ENCODE measurements at regions of chrX and their contacts with region 1.

Region 1: GRCh38 chrX:24479924-24480323 is 14.8 kb downstream of the PDK3 start:
- DNase-seq: peak; percentile 82
- ATAC-seq: peak; percentile 94
- H3K4me3 Mint-ChIP-seq: peak overlapping the region; percentile 68
- H3K27ac Mint-ChIP-seq: peak overlapping the region; percentile 91
- H3K4me1 Mint-ChIP-seq: peaks cover 75% of the 10 kb centered on the region
- H3K27me3 Mint-ChIP-seq: no peaks in the 10 kb centered on the region

Region 2: GRCh38 chrX:24498975-24499374 is 19.1 kb after region 1 on chrX:
- CTCF ChIA-PET with region 1: interaction called, 32 read pairs
- POLR2A ChIA-PET with region 1: interaction called, 4 read pairs
- intact Hi-C with region 1: loop called in 1 of 2 experiments (anchors 2 kb)
- DNase-seq: no peak
- ATAC-seq: peak; percentile 78
- H3K4me3 Mint-ChIP-seq: no peak overlapping the region
- H3K27ac Mint-ChIP-seq: peak overlapping the region; percentile 43
- H3K4me1 Mint-ChIP-seq: peaks cover 23% of the 10 kb centered on the region
- H3K27me3 Mint-ChIP-seq: no peaks in the 10 kb centered on the region

Region 3: DNA sequence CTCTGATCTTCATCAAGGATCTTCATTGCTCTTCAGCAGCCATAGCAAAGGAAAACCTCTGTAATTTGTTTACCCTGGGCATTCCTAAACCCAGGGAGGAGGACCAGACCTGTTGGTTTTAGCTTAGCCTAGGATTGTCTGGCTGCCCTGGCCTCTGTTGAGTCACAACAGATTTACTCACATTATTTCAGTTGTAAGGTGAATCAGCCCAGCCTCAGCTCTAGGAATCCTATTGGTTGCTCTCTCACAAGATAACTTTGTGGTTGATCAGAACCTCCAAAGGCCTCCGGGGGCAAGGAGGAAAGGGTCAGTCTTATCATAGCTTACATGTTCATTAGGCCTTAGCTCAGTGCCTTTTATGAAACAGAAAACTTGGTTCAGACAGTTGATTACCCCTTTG is 26.1 kb after region 1 on chrX:
- CTCF ChIA-PET with region 1: interaction called, 4 read pairs
- POLR2A ChIA-PET with region 1: interaction called, 3 read pairs
- intact Hi-C with region 1: loop called (anchors 2 to 5 kb)
- DNase-seq: peak; percentile 53
- ATAC-seq: peak; percentile 93
- H3K4me3 Mint-ChIP-seq: no peak overlapping the region
- H3K27ac Mint-ChIP-seq: peak overlapping the region; percentile 73
- H3K4me1 Mint-ChIP-seq: peaks cover 24% of the 10 kb centered on the region
- H3K27me3 Mint-ChIP-seq: no peaks in the 10 kb centered on the region

Region 4: GRCh38 chrX:24513416-24513815 is 33.5 kb after region 1 on chrX:
- CTCF ChIA-PET with region 1: no interaction called
- POLR2A ChIA-PET with region 1: no interaction called
- intact Hi-C with region 1: loop called in 1 of 2 experiments (anchors 5 kb)
- DNase-seq: peak; percentile 65
- ATAC-seq: peak; percentile 97
- H3K4me3 Mint-ChIP-seq: no peak overlapping the region
- H3K27ac Mint-ChIP-seq: peak overlapping the region; percentile 73
- H3K4me1 Mint-ChIP-seq: peaks cover 20% of the 10 kb centered on the region
- H3K27me3 Mint-ChIP-seq: no peaks in the 10 kb centered on the region

Region 5: GRCh38 chrX:24682739-24683432 is 203.0 kb after region 1 on chrX:
- CTCF ChIA-PET with region 1: no interaction called
- POLR2A ChIA-PET with region 1: no interaction called
- intact Hi-C with region 1: loop called in 1 of 2 experiments (anchors 5 kb)
- DNase-seq: peak; percentile 64
- ATAC-seq: peak; percentile 99
- H3K4me3 Mint-ChIP-seq: no peak overlapping the region
- H3K27ac Mint-ChIP-seq: peak overlapping the region; percentile 61
- H3K4me1 Mint-ChIP-seq: peaks cover 21% of the 10 kb centered on the region
- H3K27me3 Mint-ChIP-seq: peaks cover 5% of the 10 kb centered on the region